H1 (cell line): ENCODE measurements at regions of chr16 and their contacts with region 1.

Region 1: GRCh38 chr16:30984669-30985400 is at the start of gene HSD3B7:
- DNase-seq: peak; percentile 74 to 100
- H3K4me3 ChIP-seq: peak within 1 kb of the TSS in 3 of 4 experiments; percentile 20 to 50 (median 40); a peak in 5 of 8 replicates
- H3K27ac ChIP-seq: no peak within 1 kb of the TSS
- H3K4me1 ChIP-seq: peaks cover 0 to 5% (median 2%) of the 10 kb centered on the region in 4 experiments; a peak in 4 of 7 replicates
- H3K27me3 ChIP-seq: no peaks in the 10 kb centered on the region
- CTCF ChIP-seq: peak; percentile 88 to 96 (median 94)
- EP300 ChIP-seq: no peak
- POLR2A ChIP-seq: peak in 1 of 2 experiments; percentile 60; a peak in 2 of 3 replicates
- RAD21 ChIP-seq: peak; percentile 79 to 84
- total RNA-seq, gene HSD3B7: 2.9 and 3.1 TPM in 2 replicates

Region 2: GRCh38 chr16:30829130-30830071 is 155.4 kb before region 1 on chr16:
- CTCF ChIA-PET with region 1: no interaction called
- POLR2A ChIA-PET with region 1: no interaction called
- DNase-seq: no peak
- H3K4me3 ChIP-seq: no peak overlapping the region
- H3K27ac ChIP-seq: no peak overlapping the region
- H3K4me1 ChIP-seq: no peaks in the 10 kb centered on the region
- H3K27me3 ChIP-seq: peaks cover 0 to 2% (median 0%) of the 10 kb centered on the region in 4 experiments; a peak in 3 of 7 replicates
- CTCF ChIP-seq: peak in 1 of 3 experiments; percentile 18; a peak in 1 of 4 replicates
- EP300 ChIP-seq: no peak
- POLR2A ChIP-seq: no peak
- RAD21 ChIP-seq: no peak

Region 3: GRCh38 chr16:30957456-30958174 is 27.2 kb before region 1 on chr16 and contains the start of gene SETD1A:
- CTCF ChIA-PET with region 1: interaction called, 39 read pairs
- POLR2A ChIA-PET with region 1: interaction called, 45 read pairs
- DNase-seq: peak in 1 of 2 experiments; percentile 96
- H3K4me3 ChIP-seq: peak within 1 kb of the TSS; percentile 60 to 96 (median 90)
- H3K27ac ChIP-seq: peak within 1 kb of the TSS; percentile 100
- H3K4me1 ChIP-seq: peaks cover 0 to 9% (median 2%) of the 10 kb centered on the region in 4 experiments; a peak in 3 of 7 replicates
- H3K27me3 ChIP-seq: no peaks in the 10 kb centered on the region
- CTCF ChIP-seq: no peak
- EP300 ChIP-seq: peak in 1 of 2 experiments; percentile 98; a peak in 1 of 3 replicates
- POLR2A ChIP-seq: peak in 1 of 2 experiments; percentile 54; a peak in 1 of 3 replicates
- RAD21 ChIP-seq: no peak
- total RNA-seq, gene SETD1A: 29.0 and 29.6 TPM in 2 replicates

Region 4: DNA sequence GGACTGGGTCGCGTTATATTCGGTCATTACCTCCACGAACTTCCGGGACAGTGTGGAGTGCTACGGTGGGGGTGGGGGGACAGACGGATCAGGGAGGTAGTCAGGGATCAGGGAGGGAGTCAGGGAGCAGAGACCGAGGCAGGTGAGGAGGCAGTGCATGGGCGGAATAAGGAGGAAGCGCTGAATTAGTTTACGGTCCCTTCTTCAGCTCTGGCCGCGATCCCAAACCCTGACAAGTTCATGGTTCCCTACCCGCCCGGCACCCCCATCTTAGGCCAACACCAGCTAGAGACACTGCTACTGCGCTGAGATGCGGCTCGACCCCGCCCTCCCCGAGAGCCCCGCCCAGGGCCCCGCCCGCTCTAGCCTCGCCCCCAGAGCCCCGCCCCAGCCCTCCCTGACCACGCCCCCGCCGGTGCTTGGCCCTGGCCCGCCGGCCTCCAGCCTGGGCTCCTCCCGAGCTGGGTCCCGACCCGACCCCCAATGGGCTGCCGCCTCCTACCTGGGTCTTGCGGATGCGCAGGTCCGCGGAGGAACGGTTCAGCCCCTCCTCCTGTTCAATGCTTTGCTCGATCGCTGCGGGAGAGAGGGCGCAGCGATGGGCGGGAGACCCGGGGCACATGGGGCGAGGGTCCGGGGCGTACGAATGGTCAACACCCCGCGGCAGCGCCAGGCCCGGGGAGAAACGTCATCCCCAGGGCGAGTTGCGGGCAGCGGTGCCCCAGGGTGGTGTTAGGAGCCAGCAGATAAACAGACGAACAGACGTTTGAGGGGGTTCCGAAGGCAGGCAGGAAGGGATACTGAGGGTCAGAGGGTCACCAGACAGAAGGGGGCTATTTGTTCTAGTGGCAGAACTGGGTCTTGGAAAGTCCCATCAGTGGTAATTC is 12.4 kb after region 1 on chr16:
- CTCF ChIA-PET with region 1: interaction called, 27 read pairs
- POLR2A ChIA-PET with region 1: interaction called, 20 read pairs
- DNase-seq: peak; percentile 77 to 89
- H3K4me3 ChIP-seq: peak overlapping the region; percentile 53 to 81 (median 64)
- H3K27ac ChIP-seq: no peak overlapping the region; the same call in 1 of the 2 replicates
- H3K4me1 ChIP-seq: peaks cover 0 to 15% (median 10%) of the 10 kb centered on the region in 4 experiments; a peak in 6 of 7 replicates
- H3K27me3 ChIP-seq: no peaks in the 10 kb centered on the region; a peak in 1 of 7 replicates
- CTCF ChIP-seq: no peak
- EP300 ChIP-seq: no peak
- POLR2A ChIP-seq: no peak; a peak in 1 of 3 replicates
- RAD21 ChIP-seq: no peak; a peak in 1 of 4 replicates

Region 5: GRCh38 chr16:31009894-31010584 is 25.2 kb after region 1 on chr16:
- CTCF ChIA-PET with region 1: interaction called, 21 read pairs
- POLR2A ChIA-PET with region 1: interaction called, 6 read pairs
- DNase-seq: peak in 1 of 2 experiments; percentile 65
- H3K4me3 ChIP-seq: peak overlapping the region; percentile 36 to 63 (median 42)
- H3K27ac ChIP-seq: no peak overlapping the region
- H3K4me1 ChIP-seq: peaks cover 4 to 18% (median 6%) of the 10 kb centered on the region in 4 experiments
- H3K27me3 ChIP-seq: no peaks in the 10 kb centered on the region; a peak in 2 of 7 replicates
- CTCF ChIP-seq: peak in 2 of 3 experiments; percentile 37 to 48; a peak in 2 of 4 replicates
- EP300 ChIP-seq: no peak
- POLR2A ChIP-seq: no peak
- RAD21 ChIP-seq: peak; percentile 12 to 43; a peak in 2 of 4 replicates

Region 6: GRCh38 chr16:31029272-31029671 is 44.4 kb after region 1 on chr16:
- CTCF ChIA-PET with region 1: interaction called, 18 read pairs
- POLR2A ChIA-PET with region 1: interaction called, 4 read pairs
- DNase-seq: no peak
- H3K4me3 ChIP-seq: no peak overlapping the region
- H3K27ac ChIP-seq: no peak overlapping the region
- H3K4me1 ChIP-seq: peaks cover 0 to 4% (median 2%) of the 10 kb centered on the region in 4 experiments; a peak in 4 of 7 replicates
- H3K27me3 ChIP-seq: no peaks in the 10 kb centered on the region
- CTCF ChIP-seq: no peak
- EP300 ChIP-seq: no peak
- POLR2A ChIP-seq: no peak
- RAD21 ChIP-seq: no peak

Region 7: GRCh38 chr16:31052124-31052523 is 67.3 kb after region 1 on chr16:
- CTCF ChIA-PET with region 1: interaction called, 20 read pairs
- POLR2A ChIA-PET with region 1: interaction called, 3 read pairs
- DNase-seq: no peak
- H3K4me3 ChIP-seq: no peak overlapping the region
- H3K27ac ChIP-seq: no peak overlapping the region
- H3K4me1 ChIP-seq: peaks cover 0 to 4% (median 0%) of the 10 kb centered on the region in 4 experiments; a peak in 2 of 7 replicates
- H3K27me3 ChIP-seq: no peaks in the 10 kb centered on the region
- CTCF ChIP-seq: no peak
- EP300 ChIP-seq: no peak
- POLR2A ChIP-seq: no peak
- RAD21 ChIP-seq: no peak

Region 8: GRCh38 chr16:31073968-31074813 is 89.4 kb after region 1 on chr16 and contains the starts of genes ZNF646 and ZNF668:
- CTCF ChIA-PET with region 1: interaction called, 17 read pairs
- POLR2A ChIA-PET with region 1: interaction called, 8 read pairs
- DNase-seq: peak; percentile 89 to 97
- H3K4me3 ChIP-seq: peak within 1 kb of the TSS; percentile 89 to 98 (median 90)
- H3K27ac ChIP-seq: peak within 1 kb of the TSS; percentile 82
- H3K4me1 ChIP-seq: peaks cover 0 to 1% (median 0%) of the 10 kb centered on the region in 4 experiments; a peak in 2 of 7 replicates
- H3K27me3 ChIP-seq: no peaks in the 10 kb centered on the region
- CTCF ChIP-seq: no peak
- EP300 ChIP-seq: no peak; a peak in 1 of 3 replicates
- POLR2A ChIP-seq: peak; percentile 72 to 92
- RAD21 ChIP-seq: no peak
- total RNA-seq, gene ZNF646: 25.0 TPM in 2 replicates
- total RNA-seq, gene ZNF668: 13.6 and 14.0 TPM in 2 replicates